BJ (cell line): ENCODE measurements at regions of chr9 and their contacts with region 1.

Region 1: DNA sequence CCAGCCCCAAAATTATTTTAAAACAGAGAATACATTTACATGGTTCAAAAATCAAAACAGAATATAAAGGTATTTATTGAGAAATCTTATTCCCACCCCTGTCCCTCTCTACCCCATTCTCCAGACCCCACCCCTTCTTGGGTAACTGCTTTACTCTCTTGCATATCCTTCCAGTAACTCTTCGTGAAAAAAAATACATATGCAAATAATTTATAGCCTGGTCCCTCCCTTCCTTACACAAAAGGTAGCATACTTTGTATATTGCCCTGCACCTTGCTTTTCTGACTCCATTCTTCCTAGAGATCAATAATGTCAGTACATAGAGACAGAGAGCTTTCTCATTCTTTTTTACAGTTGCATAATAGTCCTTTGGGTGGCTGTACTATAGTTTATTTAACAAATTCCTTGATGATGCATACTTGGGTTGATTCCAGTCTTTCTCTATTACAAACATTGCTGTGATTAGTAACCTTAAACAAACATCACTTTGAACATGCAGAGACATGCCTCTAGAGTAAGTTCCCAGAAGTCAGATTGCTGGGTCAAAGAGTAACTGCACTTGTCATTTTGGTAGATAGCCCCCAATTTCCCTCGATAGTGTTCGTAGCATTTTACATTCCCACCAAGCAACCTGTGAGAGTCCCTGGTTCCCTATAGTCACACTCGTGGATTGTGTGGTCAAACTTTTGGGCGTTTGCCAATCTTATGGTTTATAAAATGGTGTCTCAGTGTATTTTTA is 47.8 kb downstream of the STOM start:
- DNase-seq: peak; percentile 88
- H3K4me3 ChIP-seq: no peak overlapping the region
- H3K27me3 ChIP-seq: no peaks in the 10 kb centered on the region
- CTCF ChIP-seq: no peak

Region 2: GRCh38 chr9:121213136-121213806 is 108.9 kb before region 1 on chr9:
- CTCF ChIA-PET with region 1: interaction called, 37 read pairs
- POLR2A ChIA-PET with region 1: no interaction called
- DNase-seq: peak; percentile 34
- H3K4me3 ChIP-seq: no peak overlapping the region
- H3K27me3 ChIP-seq: no peaks in the 10 kb centered on the region
- CTCF ChIP-seq: peak; percentile 96

Region 3: GRCh38 chr9:121252104-121252851 is 69.9 kb before region 1 on chr9:
- CTCF ChIA-PET with region 1: no interaction called
- POLR2A ChIA-PET with region 1: no interaction called
- DNase-seq: no peak
- H3K4me3 ChIP-seq: no peak overlapping the region
- H3K27me3 ChIP-seq: no peaks in the 10 kb centered on the region
- CTCF ChIP-seq: no peak

Region 4: DNA sequence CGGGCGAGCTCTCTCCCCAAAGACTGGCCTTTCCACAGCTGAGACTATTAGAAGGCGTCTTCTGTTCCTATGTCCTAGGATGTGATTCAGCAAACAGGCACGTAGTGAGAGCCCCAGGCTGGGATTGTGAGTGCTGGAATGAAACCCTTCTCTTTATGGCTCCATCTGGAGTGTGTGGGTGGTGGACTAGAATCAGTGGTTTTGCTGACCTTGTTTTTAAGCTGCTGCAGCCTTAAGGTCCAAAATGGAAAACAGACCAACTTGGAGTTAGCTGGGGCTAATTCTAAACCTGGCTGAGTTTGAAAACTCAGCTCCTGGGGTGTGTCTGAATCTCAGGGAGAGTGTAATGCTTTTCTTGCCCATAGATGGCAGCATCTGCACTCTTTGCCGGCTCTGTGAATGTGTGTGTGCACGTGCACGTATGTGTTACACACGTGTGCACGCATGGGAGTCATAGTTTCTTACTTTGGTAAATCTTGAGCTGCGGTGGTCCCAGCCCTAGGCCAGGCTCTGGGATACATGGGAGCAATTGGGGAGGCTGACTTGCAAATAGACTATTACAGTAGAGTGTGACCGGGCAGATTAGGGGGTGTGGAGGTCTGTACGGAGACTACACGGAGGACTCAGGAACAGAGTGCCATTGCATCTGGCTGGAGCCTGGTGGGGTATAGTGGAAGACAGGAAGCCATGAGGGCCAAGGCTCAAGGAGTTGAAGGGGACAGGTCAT is 43.5 kb before region 1 on chr9:
- CTCF ChIA-PET with region 1: interaction called, 22 read pairs
- POLR2A ChIA-PET with region 1: no interaction called
- DNase-seq: peak; percentile 100
- H3K4me3 ChIP-seq: no peak overlapping the region
- H3K27me3 ChIP-seq: no peaks in the 10 kb centered on the region
- CTCF ChIP-seq: peak; percentile 86

Region 5: DNA sequence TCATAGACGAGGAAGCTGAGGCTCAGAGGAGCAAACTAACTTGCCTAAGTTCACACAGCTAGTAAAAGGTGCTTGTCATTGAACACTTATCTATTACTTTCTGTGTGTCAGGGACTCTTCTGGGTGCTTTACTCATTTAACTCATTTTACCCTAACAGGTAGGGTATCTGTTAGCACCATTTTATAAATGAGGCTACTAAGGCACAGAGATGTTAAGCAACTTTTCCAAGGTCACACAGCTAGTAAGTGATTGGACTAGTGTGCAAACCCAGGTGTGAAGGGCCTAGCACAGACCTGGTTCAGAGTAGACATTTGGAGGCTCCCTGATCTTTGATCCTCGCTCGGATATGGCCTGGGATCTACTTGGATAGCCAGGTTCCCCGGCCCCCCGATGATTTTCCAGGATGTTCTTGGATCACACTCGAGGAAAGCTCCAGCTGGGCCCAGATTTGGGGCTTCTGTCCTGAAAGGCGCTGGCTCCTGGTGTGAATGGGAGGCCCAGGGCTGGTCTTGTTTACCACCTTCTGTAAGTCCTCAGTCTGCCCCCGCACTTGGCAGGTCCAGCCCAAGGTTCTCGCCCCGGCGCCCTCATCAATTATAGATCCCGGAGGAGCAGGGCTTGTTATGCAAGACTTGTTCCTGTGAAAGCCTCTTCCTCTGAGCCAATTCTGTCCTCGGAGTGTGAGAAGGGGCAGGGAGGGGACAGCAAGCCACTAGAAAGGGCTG is 16.8 kb before region 1 on chr9:
- CTCF ChIA-PET with region 1: interaction called, 17 read pairs
- POLR2A ChIA-PET with region 1: no interaction called
- DNase-seq: no peak
- H3K4me3 ChIP-seq: no peak overlapping the region
- H3K27me3 ChIP-seq: no peaks in the 10 kb centered on the region
- CTCF ChIP-seq: no peak

Region 6: GRCh38 chr9:121362813-121363621 is 40.8 kb after region 1 on chr9:
- CTCF ChIA-PET with region 1: interaction called, 16 read pairs
- POLR2A ChIA-PET with region 1: no interaction called
- DNase-seq: peak; percentile 92
- H3K4me3 ChIP-seq: no peak overlapping the region
- H3K27me3 ChIP-seq: no peaks in the 10 kb centered on the region
- CTCF ChIP-seq: no peak

Region 7: DNA sequence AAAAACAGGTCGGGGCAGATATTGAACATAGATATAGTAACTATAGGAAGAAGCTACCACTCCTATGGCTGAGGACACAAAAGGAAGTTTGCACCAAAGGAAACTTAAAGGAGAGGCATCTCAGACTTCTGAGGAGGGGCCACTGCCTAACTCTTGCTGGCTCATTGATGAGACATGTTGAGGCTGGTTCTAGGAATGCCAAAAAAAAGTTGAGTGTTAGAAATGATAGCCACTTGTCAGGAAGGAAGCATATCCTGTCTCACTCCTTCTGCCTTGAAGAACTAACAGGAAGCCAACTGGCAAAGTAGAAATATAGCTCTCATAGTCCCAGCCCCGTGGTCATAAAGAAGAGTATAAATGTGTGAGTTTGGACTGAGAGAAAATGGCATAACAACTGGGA is 71.1 kb after region 1 on chr9:
- CTCF ChIA-PET with region 1: interaction called, 80 read pairs
- POLR2A ChIA-PET with region 1: interaction called, 3 read pairs
- DNase-seq: no peak
- H3K4me3 ChIP-seq: no peak overlapping the region
- H3K27me3 ChIP-seq: no peaks in the 10 kb centered on the region
- CTCF ChIP-seq: no peak

Region 8: DNA sequence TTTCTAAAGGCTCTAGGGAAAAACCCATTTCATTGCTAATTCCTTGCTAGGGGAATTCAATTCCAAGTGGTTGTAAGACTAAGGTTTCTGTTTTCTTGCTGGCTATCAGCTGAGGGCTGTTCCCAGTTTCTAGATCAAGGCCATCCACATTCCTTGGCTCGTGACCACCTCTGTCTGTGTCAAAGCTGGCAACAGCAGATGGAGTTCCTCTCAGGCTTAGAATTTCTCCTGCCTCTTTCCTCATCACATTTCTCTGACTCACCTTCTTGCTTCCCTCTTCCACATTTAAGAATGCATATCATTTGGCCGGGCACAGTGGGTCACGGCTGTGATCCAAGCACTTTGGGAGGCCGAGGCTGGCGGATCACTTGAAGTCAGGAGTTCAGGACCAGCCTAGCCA is 348.2 kb after region 1 on chr9:
- CTCF ChIA-PET with region 1: no interaction called
- POLR2A ChIA-PET with region 1: no interaction called
- DNase-seq: no peak
- H3K4me3 ChIP-seq: no peak overlapping the region
- H3K27me3 ChIP-seq: no peaks in the 10 kb centered on the region
- CTCF ChIP-seq: no peak